ENCODE measurements at regions of chr1 and their contacts with region 1.

Region 1: GRCh38 chr1:156154317-156154749 is 948 bp downstream of the SEMA4A start:
- DNase-seq: peak; percentile 66
- H3K4me3 Mint-ChIP-seq: peak overlapping the region; percentile 76
- H3K27ac Mint-ChIP-seq: peak overlapping the region; percentile 71
- H3K4me1 Mint-ChIP-seq: peaks cover 63% of the 10 kb centered on the region
- H3K27me3 Mint-ChIP-seq: no peaks in the 10 kb centered on the region

Region 2: GRCh38 chr1:155978325-155978972 is 175.9 kb before region 1 on chr1 and contains the start of gene ARHGEF2:
- CTCF ChIA-PET with region 1: no interaction called
- POLR2A ChIA-PET with region 1: no interaction called
- DNase-seq: peak; percentile 84
- H3K4me3 Mint-ChIP-seq: peak within 1 kb of the TSS; percentile 100
- H3K27ac Mint-ChIP-seq: peak within 1 kb of the TSS; percentile 93
- H3K4me1 Mint-ChIP-seq: peaks cover 60% of the 10 kb centered on the region
- H3K27me3 Mint-ChIP-seq: no peaks in the 10 kb centered on the region
- total RNA-seq, gene ARHGEF2: 159 to 164 TPM

Region 3: DNA sequence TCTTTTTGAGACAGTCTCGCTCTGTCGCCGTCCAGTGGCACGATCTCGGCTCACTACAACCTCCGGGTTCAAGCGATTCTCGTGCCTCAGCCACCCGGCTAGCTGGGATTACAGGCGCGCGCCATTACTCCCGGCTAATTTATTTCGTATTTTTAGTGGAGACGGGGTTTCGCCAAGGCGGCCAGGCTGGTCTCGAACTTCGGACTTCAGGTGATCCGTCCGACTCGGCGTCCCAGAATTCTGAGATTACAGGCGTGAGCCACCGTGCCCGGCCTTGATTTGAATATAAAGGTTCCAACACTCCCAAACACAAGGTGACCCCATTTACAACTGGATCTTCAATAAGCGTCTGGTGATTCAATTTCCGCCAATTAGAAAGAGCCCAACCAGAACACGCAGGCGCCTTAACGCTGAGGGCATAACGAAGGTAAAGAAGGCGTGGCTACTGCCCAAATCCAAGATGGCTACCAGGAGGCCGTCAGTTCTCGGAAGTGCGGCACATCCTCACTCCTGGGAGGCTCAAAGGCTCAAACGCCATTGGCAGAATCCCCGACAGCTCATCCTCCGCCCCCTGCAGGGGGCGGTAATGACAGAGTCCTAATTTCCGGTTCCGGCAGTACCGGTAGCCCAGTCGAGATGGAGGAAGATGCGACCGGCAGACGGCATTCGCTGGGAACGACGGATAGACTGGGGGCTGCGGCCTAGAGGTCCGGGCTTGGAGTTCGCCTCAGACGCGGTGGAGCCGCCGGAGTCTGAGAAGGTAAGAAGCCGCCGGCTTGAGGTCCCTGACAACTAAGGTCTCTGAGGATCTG is 39.4 kb after region 1 on chr1 and contains the start of gene SLC25A44:
- CTCF ChIA-PET with region 1: interaction called, 4 read pairs
- POLR2A ChIA-PET with region 1: interaction called, 16 read pairs
- DNase-seq: peak; percentile 98
- H3K4me3 Mint-ChIP-seq: peak within 1 kb of the TSS; percentile 85
- H3K27ac Mint-ChIP-seq: peak within 1 kb of the TSS; percentile 73
- H3K4me1 Mint-ChIP-seq: peaks cover 59% of the 10 kb centered on the region
- H3K27me3 Mint-ChIP-seq: no peaks in the 10 kb centered on the region
- total RNA-seq, gene SLC25A44: 27.7 to 36.3 TPM

Measured in activated CD4-positive, alpha-beta memory T cell treated with anti-CD3 and anti-CD28 coated beads, Interleukin-2, amount 10 ng/mL, durations not matched to agents 7 days and 5 days (primary cell).